ENCODE measurements at regions of chr9 and their contacts with region 1.

Region 1: DNA sequence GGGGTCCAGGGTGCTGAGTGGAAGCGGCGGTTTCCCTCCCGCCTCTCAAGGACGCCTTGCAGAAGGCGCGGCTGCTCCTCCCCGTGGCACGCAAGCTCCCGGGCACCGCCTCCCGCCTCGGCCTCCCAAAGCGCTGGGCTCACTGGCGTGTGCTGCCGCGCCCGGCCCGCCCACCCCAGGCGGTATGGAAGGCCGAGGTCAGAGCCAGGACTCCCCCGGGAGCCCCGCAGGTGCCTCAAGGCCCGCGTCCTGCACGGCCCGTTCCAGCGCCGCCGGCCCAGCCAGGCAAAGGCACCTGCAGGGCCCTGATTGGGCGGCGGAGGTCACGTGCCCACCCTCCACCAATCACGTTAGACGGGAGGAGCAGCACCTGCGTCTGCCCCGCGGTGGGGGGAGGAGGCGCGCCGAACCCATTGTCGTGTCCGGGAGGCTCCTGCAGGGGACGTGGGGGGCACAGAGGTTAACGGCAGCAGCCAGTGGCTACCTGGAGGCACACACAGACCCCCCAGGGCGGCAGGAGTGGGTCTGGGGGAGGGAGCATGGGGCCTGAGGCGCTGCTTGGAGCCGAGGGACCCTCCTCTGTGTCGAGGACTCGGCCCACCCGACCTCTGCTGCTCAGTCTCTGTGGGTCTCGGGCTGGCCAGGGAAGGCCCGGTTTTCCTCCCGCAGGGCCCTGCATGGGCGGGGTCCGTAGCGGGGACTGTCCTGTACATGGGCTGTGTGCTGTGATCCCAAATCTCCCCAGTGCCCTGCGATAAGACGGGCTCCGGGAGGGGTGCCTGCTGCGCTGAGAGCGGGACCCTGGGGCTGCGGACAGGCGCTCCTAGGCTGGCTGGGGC is 2.0 kb upstream of the LCN12 start:
- DNase-seq: peak; percentile 94 to 96
- ATAC-seq: peak; percentile 87 to 93 (median 89)
- H3K4me3 ChIP-seq: peak overlapping the region; percentile 85
- H3K27ac ChIP-seq: peak overlapping the region; percentile 87
- H3K4me1 ChIP-seq: peaks cover 20% of the 10 kb centered on the region
- H3K27me3 ChIP-seq: no peaks in the 10 kb centered on the region
- CTCF ChIP-seq: no peak

Region 2: GRCh38 chr9:137034863-137035761 is 85.1 kb after region 1 on chr9:
- intact Hi-C with region 1: loop called in 1 of 2 experiments (anchors 2 kb)
- DNase-seq: peak; percentile 78 to 92
- ATAC-seq: peak; percentile 74 to 94 (median 92)
- H3K4me3 ChIP-seq: no peak overlapping the region
- H3K27ac ChIP-seq: no peak overlapping the region
- H3K4me1 ChIP-seq: peaks cover 6% of the 10 kb centered on the region
- H3K27me3 ChIP-seq: peaks cover 0 to 6% (median 0%) of the 10 kb centered on the region in 3 donors
- CTCF ChIP-seq: peak; percentile 88

Measured in psoas muscle (tissue), 8 donors.